ENCODE measurements at regions of chr5 and their contacts with region 1.

Region 1: DNA sequence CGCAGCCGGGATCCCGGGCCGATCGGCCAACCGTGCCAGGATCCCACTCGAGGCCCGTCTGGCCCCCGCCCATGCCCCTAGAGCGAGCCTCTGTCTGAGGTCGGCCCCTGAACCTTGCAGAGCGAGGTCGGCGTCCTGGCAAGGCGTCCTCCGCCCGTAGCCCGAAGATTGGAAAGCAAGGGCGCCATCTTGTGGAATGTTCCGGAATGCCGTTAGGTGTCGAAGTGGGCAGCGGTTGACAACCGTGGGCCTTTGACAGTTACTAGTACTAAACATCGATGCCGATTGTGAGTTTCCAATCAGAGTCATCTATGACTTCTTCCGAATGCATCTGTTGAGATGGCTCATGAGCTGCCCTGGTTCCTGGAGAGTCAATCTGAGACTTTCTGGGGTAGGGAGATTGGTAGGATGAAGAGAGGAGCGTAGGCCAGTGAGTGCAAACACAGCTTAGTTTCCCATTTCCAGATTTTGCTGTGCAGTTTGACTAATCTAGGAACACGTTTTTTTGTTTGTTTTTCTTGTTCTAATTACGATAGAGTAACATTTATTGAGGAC is 923 bp upstream of the PLK2 start:
- DNase-seq: peak; percentile 72 to 92 (median 88)
- H3K4me3 ChIP-seq: peak overlapping the region; percentile 54 to 98 (median 86)
- H3K27ac ChIP-seq: peak overlapping the region; percentile 57 to 98 (median 93)
- H3K27me3 ChIP-seq: no peaks in the 10 kb centered on the region
- CTCF ChIP-seq: peak; percentile 72 to 97 (median 88)

Region 2: GRCh38 chr5:56909294-56910209 is 1551.3 kb before region 1 on chr5 and contains the start of gene SETD9:
- intact Hi-C with region 1: loop called in 1 of 2 experiments (anchors 10 kb)
- DNase-seq: peak; percentile 95 to 98 (median 96)
- H3K4me3 ChIP-seq: peak within 1 kb of the TSS; percentile 54 to 92 (median 78)
- H3K27ac ChIP-seq: peak within 1 kb of the TSS; percentile 67 to 99 (median 97)
- H3K27me3 ChIP-seq: no peaks in the 10 kb centered on the region
- CTCF ChIP-seq: peak in 21 of 56 donors; percentile 4 to 40 (median 18)
- total RNA-seq, gene SETD9: 1.8 to 16.2 (median 5.6) TPM

Region 3: DNA sequence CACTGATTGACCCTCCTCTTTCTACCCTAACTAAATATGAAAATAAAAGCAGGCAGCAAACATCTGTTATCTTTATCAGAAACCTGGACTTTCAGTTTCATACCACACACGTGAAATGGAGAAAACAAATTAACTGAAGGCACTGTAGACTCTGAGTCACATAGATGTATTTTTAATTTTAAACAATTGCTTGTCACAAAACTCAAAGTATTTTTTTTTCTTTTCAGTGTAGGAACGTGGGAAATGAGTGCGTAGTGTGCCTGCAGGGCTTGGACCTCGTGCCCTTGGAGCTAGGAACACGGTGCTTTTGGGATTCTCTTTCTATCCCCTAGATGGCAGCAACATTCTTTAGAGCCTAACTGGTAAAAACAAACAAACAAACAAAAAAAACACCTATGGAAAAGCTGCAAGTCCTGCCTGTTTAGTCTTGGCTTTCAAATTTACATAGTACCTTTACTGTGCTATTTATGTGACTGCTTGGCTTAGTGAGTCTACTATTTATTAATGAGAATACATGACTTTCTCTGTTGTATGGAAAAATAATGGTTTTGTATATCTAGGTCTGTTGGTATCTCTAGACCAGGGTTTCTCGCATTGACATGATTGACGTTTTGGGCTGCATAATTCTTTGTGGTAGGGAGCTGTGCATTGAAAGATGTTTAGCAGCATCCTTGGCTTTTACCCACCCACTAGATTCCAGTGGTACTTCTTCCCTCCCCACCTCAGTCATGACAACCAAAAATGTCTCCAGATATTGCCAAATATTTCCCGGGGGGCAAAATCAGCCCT is 961.4 kb before region 1 on chr5:
- intact Hi-C with region 1: loop called (anchors 1 to 2 kb)
- DNase-seq: no peak
- H3K4me3 ChIP-seq: peak overlapping the region in 26 of 59 donors; percentile 2 to 38 (median 20)
- H3K27ac ChIP-seq: peak overlapping the region in 37 of 59 donors; percentile 1 to 78 (median 33)
- H3K27me3 ChIP-seq: no peaks in the 10 kb centered on the region
- CTCF ChIP-seq: peak; percentile 63 to 93 (median 80)

Region 4: DNA sequence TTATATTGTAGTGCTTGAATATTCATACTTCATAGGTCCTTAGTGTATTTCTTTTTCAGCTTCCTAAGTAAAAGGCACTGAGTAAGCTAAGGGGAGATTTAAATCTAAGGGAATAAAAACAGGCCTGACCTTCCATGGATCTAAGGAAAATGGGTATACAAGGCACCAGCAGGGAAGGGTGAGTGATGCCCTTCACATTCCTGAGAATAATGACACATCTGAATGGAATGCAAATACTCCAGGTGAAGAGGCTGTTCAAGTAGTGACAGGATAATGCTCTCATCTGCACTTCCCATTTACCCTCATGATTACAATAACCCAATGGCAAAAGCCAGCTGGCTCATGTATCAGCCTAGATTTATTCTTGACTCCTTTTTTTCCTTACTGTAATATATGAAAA is 762.0 kb before region 1 on chr5:
- intact Hi-C with region 1: loop called in 1 of 2 experiments (anchors 2 kb)
- DNase-seq: no peak
- H3K4me3 ChIP-seq: no peak overlapping the region
- H3K27ac ChIP-seq: peak overlapping the region in 29 of 59 donors; percentile 3 to 89 (median 49)
- H3K27me3 ChIP-seq: no peaks in the 10 kb centered on the region
- CTCF ChIP-seq: no peak

Region 5: DNA sequence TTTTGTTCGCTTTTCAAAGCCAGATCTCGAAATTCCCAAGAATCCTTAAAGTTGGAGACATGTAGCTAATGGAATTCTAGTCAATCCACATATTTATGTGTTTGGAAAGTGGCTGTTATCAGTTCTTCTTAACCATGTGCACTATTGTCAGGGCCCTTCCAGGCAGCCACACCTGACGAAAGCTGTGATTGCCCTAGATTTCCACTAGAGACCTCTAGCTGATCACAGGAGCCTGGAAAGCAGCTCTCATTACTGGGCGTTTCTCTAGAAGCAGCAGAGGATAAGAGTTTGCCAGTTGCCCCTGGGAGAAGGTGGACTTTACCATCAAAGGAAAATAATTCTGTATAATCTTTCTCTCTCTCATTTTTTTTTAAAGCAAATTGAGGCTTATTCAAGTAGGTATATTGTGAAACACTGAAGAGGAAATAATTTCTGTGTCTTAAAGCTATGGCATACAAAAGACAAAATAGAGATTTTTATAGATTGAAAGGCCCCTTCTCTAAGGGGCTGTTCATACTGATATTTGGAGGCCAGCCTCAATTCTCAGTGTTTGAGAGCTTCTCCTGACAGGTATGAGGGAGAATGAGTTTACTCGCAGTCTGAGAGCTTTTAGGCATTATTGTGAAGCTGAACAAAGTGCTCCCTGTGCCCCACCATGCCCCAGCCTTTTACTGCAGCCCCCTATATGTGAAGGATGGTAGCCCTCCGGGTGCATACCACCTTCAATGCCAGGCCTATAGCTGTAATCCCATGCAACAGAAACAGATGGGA is 572.8 kb before region 1 on chr5:
- intact Hi-C with region 1: loop called in 1 of 2 experiments (anchors 5 kb)
- DNase-seq: peak in 3 of 10 donors; percentile 20 to 61 (median 41)
- H3K4me3 ChIP-seq: no peak overlapping the region
- H3K27ac ChIP-seq: peak overlapping the region in 34 of 59 donors; percentile 0 to 69 (median 42)
- H3K27me3 ChIP-seq: no peaks in the 10 kb centered on the region
- CTCF ChIP-seq: peak in 47 of 56 donors; percentile 14 to 61 (median 44)

Region 6: DNA sequence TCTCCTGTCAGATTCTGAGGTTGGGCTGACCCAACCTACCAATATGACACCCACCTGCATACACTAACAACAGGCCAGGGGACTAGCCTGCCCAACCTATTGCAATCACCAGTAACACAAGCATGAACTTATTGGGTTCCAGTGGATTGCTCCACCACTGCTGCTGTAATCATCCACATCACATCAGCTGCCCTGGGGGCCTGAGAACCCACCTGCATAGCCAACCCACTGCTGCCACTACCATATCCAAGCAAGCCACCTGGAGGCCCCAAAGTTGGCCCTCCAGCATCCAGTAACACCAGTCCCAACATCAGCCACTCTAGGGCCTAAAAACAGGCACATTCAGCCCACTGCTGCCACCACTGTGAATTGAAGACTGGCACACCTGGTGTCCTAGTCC is 495.5 kb before region 1 on chr5:
- intact Hi-C with region 1: no loop called
- DNase-seq: no peak
- H3K4me3 ChIP-seq: no peak overlapping the region
- H3K27ac ChIP-seq: no peak overlapping the region
- H3K27me3 ChIP-seq: no peaks in the 10 kb centered on the region
- CTCF ChIP-seq: no peak

Region 7: GRCh38 chr5:58517198-58517597 is 56.4 kb after region 1 on chr5:
- intact Hi-C with region 1: no loop called
- DNase-seq: no peak
- H3K4me3 ChIP-seq: no peak overlapping the region
- H3K27ac ChIP-seq: no peak overlapping the region
- H3K27me3 ChIP-seq: no peaks in the 10 kb centered on the region
- CTCF ChIP-seq: no peak

Measured in dorsolateral prefrontal cortex (tissue), 120 donors.